GM12878 (cell line): ENCODE measurements at regions of chr15 and their contacts with region 1.

Region 1: GRCh38 chr15:59656897-59657634 is at the start of gene GTF2A2:
- DNase-seq: peak; percentile 71
- ATAC-seq: peak; percentile 99
- H3K4me3 ChIP-seq: peak within 1 kb of the TSS; percentile 80
- H3K27ac ChIP-seq: peak within 1 kb of the TSS; percentile 77
- H3K4me1 ChIP-seq: 0 out of 2 replicates have a peak, but pooled peaks cover 4% of the 10 kb centered on the region
- H3K27me3 ChIP-seq: no peaks in the 10 kb centered on the region
- CTCF ChIP-seq: no peak
- EP300 ChIP-seq: peak in 1 of 2 experiments; percentile 19; a peak in 1 of 4 replicates
- POLR2A ChIP-seq: peak; percentile 91
- RAD21 ChIP-seq: no peak
- polyA plus RNA-seq, gene GTF2A2: 479 to 565 TPM

Region 2: DNA sequence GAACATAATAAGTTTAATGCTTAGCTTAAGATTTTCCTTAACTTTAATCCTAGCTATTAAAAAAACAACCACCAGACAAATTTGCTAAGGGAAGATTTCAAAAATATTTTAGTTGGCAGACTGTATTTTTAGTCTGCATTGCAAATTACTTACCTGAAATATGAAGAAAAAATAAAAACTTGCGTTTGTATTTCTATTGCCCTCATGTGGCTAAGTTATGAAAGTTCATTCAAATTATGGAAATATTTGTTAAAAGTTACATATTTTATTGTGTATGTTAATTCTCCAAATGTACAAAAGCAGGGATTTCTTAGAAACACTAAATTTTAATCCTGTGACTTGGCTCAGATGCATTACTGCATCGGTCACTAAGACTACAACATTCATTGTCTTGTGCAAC is 14.7 kb before region 1 on chr15:
- CTCF ChIA-PET with region 1: interaction called, 20 read pairs
- POLR2A ChIA-PET with region 1: interaction called, 4 read pairs
- RAD21 ChIA-PET with region 1: interaction called, 3 read pairs
- SMC1A ChIA-PET with region 1: interaction called, 6 read pairs
- in situ Hi-C with region 1: no loop called
- intact Hi-C with region 1: no loop called
- DNase-seq: no peak
- ATAC-seq: no peak
- H3K4me3 ChIP-seq: no peak overlapping the region
- H3K27ac ChIP-seq: no peak overlapping the region
- H3K4me1 ChIP-seq: no peaks in the 10 kb centered on the region
- H3K27me3 ChIP-seq: no peaks in the 10 kb centered on the region
- CTCF ChIP-seq: no peak
- EP300 ChIP-seq: no peak
- POLR2A ChIP-seq: no peak
- RAD21 ChIP-seq: no peak

Region 3: GRCh38 chr15:59688841-59689625 is 32.0 kb after region 1 on chr15 and contains the start of gene BNIP2:
- CTCF ChIA-PET with region 1: interaction called, 11 read pairs
- POLR2A ChIA-PET with region 1: no interaction called
- RAD21 ChIA-PET with region 1: interaction called, 3 read pairs
- SMC1A ChIA-PET with region 1: interaction called, 7 read pairs
- in situ Hi-C with region 1: no loop called
- intact Hi-C with region 1: no loop called
- DNase-seq: peak; percentile 92
- ATAC-seq: peak; percentile 91
- H3K4me3 ChIP-seq: peak within 1 kb of the TSS; percentile 94
- H3K27ac ChIP-seq: peak within 1 kb of the TSS; percentile 98
- H3K4me1 ChIP-seq: peaks cover 9% of the 10 kb centered on the region
- H3K27me3 ChIP-seq: no peaks in the 10 kb centered on the region
- CTCF ChIP-seq: no peak
- EP300 ChIP-seq: no peak
- POLR2A ChIP-seq: peak; percentile 90
- RAD21 ChIP-seq: no peak
- polyA plus RNA-seq, gene BNIP2: 29.9 to 58.5 TPM

Region 4: DNA sequence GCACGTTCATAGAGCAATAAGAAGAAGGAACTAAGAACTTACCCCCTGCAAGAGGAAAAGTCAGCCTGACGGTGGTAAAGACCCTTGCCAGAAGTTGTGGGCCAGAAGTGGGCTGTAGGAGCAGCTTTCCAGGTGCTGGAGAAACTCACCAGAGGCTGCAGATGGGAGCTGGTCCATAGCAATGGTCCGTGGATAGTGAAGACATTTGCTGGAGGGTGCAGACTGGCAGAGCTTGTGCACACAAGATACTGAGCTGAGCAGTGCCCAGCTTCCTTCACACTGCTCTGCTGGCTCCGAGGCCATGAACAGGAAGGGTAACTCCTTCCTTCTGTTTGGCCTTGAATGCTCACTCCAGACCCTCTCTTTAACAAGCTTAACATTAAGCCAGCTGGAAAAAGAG is 181.8 kb after region 1 on chr15:
- CTCF ChIA-PET with region 1: no interaction called
- POLR2A ChIA-PET with region 1: no interaction called
- RAD21 ChIA-PET with region 1: no interaction called
- SMC1A ChIA-PET with region 1: no interaction called
- in situ Hi-C with region 1: no loop called
- intact Hi-C with region 1: no loop called
- DNase-seq: no peak
- ATAC-seq: no peak
- H3K4me3 ChIP-seq: no peak overlapping the region
- H3K27ac ChIP-seq: no peak overlapping the region
- H3K4me1 ChIP-seq: no peaks in the 10 kb centered on the region
- H3K27me3 ChIP-seq: peaks cover 0 to 2% of the 10 kb centered on the region in 2 experiments; a peak in 1 of 4 replicates
- CTCF ChIP-seq: no peak
- EP300 ChIP-seq: no peak
- POLR2A ChIP-seq: no peak
- RAD21 ChIP-seq: no peak